ENCODE measurements at regions of chr1 and their contacts with region 1.

Region 1: GRCh38 chr1:156385534-156386031 is 16.6 kb downstream of the RHBG start:
- DNase-seq: peak; percentile 58
- ATAC-seq: peak; percentile 62

Region 2: GRCh38 chr1:156445789-156446263 is 60.2 kb after region 1 on chr1:
- intact Hi-C with region 1: loop called (anchors 2 kb)
- DNase-seq: peak; percentile 86
- ATAC-seq: peak; percentile 97

Measured in left ventricle myocardium superior (tissue), 1 donor.